ENCODE measurements at regions of chr19 and their contacts with region 1.

Region 1: GRCh38 chr19:15779756-15780476 is 7.5 kb upstream of the OR10H5 start:
- DNase-seq: no peak
- ATAC-seq: no peak
- H3K4me3 ChIP-seq: no peak overlapping the region
- H3K27ac ChIP-seq: no peak overlapping the region
- H3K4me1 ChIP-seq: no peaks in the 10 kb centered on the region
- H3K27me3 ChIP-seq: no peaks in the 10 kb centered on the region
- CTCF ChIP-seq: no peak
- EP300 ChIP-seq: no peak
- POLR2A ChIP-seq: no peak
- RAD21 ChIP-seq: no peak

Region 2: DNA sequence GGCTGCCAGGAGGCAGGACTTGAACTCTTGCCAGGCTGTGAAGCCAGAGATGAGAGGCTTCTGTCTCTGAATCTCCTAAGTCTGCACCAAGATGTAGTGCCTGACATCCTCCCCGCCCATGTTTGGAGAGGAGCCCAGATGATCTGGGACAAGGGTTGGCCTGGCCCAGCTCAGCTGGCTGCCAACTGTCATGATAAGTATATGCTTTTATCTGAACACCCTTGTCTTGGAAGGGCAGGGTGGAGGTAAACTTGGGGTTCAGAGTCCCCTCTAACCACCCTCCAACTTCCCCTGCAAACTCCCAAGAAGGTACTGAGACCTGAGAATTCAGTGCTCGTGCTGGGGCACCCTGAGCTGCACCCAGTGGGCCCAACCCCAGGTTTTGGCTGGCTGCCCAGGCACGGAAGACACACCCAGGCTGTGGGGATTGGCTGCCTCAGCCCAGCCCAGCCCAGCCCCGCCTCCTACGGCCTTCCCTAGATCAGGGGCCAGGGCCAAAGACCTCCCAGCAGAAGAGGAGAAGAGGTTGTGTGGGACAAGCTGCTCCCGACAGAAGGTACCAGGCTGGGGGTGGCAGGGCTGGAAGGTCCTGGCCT is 107.2 kb before region 1 on chr19 and contains the start of gene CYP4F12:
- CTCF ChIA-PET with region 1: no interaction called
- POLR2A ChIA-PET with region 1: no interaction called
- RAD21 ChIA-PET with region 1: no interaction called
- SMC1A ChIA-PET with region 1: no interaction called
- in situ Hi-C with region 1: loop called (anchors 5 kb)
- intact Hi-C with region 1: loop called (anchors 5 kb)
- DNase-seq: no peak
- ATAC-seq: peak; percentile 46
- H3K4me3 ChIP-seq: no peak within 1 kb of the TSS
- H3K27ac ChIP-seq: no peak within 1 kb of the TSS
- H3K4me1 ChIP-seq: no peaks in the 10 kb centered on the region
- H3K27me3 ChIP-seq: no peaks in the 10 kb centered on the region
- CTCF ChIP-seq: no peak
- EP300 ChIP-seq: no peak
- POLR2A ChIP-seq: no peak
- RAD21 ChIP-seq: no peak
- polyA plus RNA-seq, gene CYP4F12: not detected